ENCODE measurements at regions of chr10 and their contacts with region 1.

Region 1: DNA sequence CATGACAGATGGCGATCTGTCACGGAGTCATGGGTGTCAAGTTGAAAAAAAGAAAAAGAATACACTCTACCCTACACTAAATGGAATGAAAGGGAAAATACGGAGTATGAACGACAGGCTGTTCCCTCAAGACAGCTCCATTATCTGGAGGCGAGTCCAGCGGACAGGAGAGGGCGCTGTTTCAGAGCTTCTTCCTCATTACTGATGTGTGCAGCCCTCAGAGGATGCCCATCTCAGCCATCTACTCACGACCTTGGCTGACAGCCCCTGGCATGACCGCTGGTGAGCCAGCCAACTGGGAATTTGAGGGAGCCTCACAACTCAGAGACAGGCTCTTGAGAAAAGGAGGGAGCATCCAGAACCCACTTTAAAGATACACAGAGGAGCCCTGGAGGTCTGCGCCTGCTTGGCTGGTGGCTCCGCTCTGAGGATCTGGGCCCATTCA is 49.6 kb upstream of the SMNDC1 start:
- DNase-seq: peak; percentile 35 to 86 (median 72)
- ATAC-seq: peak; percentile 25 to 69 (median 52)
- H3K4me3 ChIP-seq: no peak overlapping the region
- H3K4me3 Mint-ChIP-seq: peak overlapping the region in 1 of 3 donors; percentile 42
- H3K27ac ChIP-seq: peak overlapping the region; percentile 35
- H3K27ac Mint-ChIP-seq: peak overlapping the region; percentile 69 to 79
- H3K4me1 ChIP-seq: peaks cover 21 to 59% of the 10 kb centered on the region in 2 experiments
- H3K4me1 Mint-ChIP-seq: peaks cover 53 to 58% (median 54%) of the 10 kb centered on the region in 3 donors
- H3K27me3 ChIP-seq: peaks cover 0 to 15% of the 10 kb centered on the region in 2 experiments
- H3K27me3 Mint-ChIP-seq: no peaks in the 10 kb centered on the region

Region 2: DNA sequence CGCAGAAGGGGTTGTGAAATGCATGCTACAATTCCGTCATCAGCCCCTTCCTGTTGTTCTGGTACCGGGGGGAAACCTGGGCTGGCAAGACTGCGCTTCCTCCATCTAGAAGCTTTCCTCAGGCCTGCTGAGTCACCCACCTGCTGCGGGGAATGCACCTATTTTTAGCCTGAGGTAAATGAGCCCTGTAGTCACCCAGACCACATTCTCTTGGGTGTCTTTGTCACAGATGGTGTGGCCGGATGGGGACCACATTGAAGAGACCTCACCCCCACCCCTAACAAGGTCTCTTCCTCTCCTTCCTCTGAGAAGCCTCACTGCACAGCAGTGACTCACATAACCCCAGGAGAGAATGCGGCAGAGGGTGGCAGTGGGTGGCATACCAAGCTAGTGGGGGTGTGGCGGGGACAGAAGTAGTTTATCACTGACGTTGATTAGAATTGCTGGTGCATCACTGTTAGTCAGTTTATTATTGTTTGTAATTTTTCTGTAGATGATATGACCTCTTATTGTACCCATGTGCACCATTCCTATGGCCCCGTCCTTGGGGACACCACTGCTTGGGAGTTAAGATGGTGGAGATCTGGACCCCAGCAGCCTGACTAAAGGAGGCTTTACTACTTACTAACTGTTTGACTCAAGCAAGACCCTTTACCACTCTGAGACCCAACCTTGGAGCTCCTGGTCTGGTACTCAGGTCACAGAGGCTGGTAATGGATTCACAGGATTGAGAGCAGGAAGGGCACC is 60.4 kb after region 1 on chr10:
- CTCF ChIA-PET with region 1: interaction called, 6 to 19 read pairs
- POLR2A ChIA-PET with region 1: no interaction called
- DNase-seq: peak; percentile 57 to 92 (median 84)
- ATAC-seq: peak; percentile 96 to 98 (median 97)
- H3K4me3 ChIP-seq: no peak overlapping the region
- H3K4me3 Mint-ChIP-seq: peak overlapping the region; percentile 18 to 63 (median 25)
- H3K27ac ChIP-seq: peak overlapping the region; percentile 88
- H3K27ac Mint-ChIP-seq: peak overlapping the region; percentile 81 to 89
- H3K4me1 ChIP-seq: peaks cover 6 to 57% of the 10 kb centered on the region in 2 experiments
- H3K4me1 Mint-ChIP-seq: peaks cover 29 to 46% (median 40%) of the 10 kb centered on the region in 3 donors
- H3K27me3 ChIP-seq: peaks cover 0 to 5% of the 10 kb centered on the region in 2 experiments
- H3K27me3 Mint-ChIP-seq: no peaks in the 10 kb centered on the region

Region 3: GRCh38 chr10:110502851-110503301 is 148.5 kb after region 1 on chr10:
- CTCF ChIA-PET with region 1: interaction called, 4 to 20 read pairs
- POLR2A ChIA-PET with region 1: interaction called in 1 of 2 experiments, 4 read pairs
- DNase-seq: peak in 1 of 35 experiments; percentile 29
- ATAC-seq: peak; percentile 2 to 22 (median 8)
- H3K4me3 ChIP-seq: peak overlapping the region in 1 of 2 donors; percentile 6
- H3K4me3 Mint-ChIP-seq: peak overlapping the region; percentile 63 to 92 (median 73)
- H3K27ac ChIP-seq: peak overlapping the region; percentile 96
- H3K27ac Mint-ChIP-seq: peak overlapping the region; percentile 86 to 97
- H3K4me1 ChIP-seq: peaks cover 16 to 79% of the 10 kb centered on the region in 2 experiments
- H3K4me1 Mint-ChIP-seq: peaks cover 72 to 86% (median 74%) of the 10 kb centered on the region in 3 donors
- H3K27me3 ChIP-seq: peaks cover 0 to 4% of the 10 kb centered on the region in 2 experiments
- H3K27me3 Mint-ChIP-seq: no peaks in the 10 kb centered on the region

Region 4: GRCh38 chr10:110547139-110547761 is 192.9 kb after region 1 on chr10:
- CTCF ChIA-PET with region 1: interaction called, 7 to 53 read pairs
- POLR2A ChIA-PET with region 1: no interaction called
- DNase-seq: peak in 2 of 35 experiments; percentile 31 to 76
- ATAC-seq: peak in 3 of 4 experiments; percentile 57 to 81 (median 67)
- H3K4me3 ChIP-seq: no peak overlapping the region
- H3K4me3 Mint-ChIP-seq: no peak overlapping the region
- H3K27ac ChIP-seq: no peak overlapping the region
- H3K27ac Mint-ChIP-seq: no peak overlapping the region
- H3K4me1 ChIP-seq: no peaks in the 10 kb centered on the region
- H3K4me1 Mint-ChIP-seq: peaks cover 0 to 5% (median 4%) of the 10 kb centered on the region in 3 donors
- H3K27me3 ChIP-seq: no peaks in the 10 kb centered on the region
- H3K27me3 Mint-ChIP-seq: peaks cover 9 to 13% of the 10 kb centered on the region in 2 donors

Measured in T-cell (primary cell).